ENCODE measurements at regions of chr14 and their contacts with region 1.

Region 1: DNA sequence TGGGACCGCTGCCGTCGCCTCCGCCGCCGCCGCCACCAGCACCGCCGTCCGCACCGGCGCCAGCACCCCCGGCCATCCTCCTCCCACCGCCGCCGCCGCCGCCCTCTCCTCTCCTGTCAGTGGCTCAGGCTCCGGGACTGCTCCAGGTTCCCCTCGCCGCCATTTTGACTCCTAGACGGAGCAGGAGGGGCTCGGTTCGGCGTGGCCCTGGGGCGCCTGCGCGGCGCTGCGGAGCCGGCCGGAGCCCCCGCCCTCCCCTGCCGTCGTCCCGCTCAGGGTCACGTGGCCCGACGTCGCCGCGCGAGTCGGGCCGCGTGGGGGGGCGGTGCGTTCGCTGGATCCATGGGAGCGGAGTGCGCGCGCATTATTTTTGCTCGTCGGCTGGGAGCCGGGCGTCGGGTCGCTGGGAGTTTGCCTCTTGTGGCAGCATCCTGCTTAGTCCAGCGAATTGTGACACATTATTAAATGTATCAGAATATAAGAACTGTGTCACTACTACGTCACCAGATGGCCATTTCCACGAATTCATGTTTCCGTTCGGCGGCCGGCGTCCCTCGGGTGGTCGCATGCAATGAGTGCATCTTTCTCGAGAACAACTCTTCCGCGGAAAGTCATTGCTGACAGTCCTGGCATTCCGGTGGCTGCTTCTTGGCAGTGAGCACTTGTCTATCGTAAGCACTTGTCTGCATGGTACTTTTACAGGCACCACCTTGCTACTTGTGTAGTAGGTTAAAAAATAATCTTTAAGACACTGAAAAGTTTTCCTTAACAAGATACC is at the start of gene BTBD7:
- DNase-seq: peak; percentile 95
- H3K4me3 Mint-ChIP-seq: peak within 1 kb of the TSS; percentile 92
- H3K27ac Mint-ChIP-seq: peak within 1 kb of the TSS; percentile 94
- H3K4me1 Mint-ChIP-seq: peaks cover 28% of the 10 kb centered on the region
- H3K27me3 Mint-ChIP-seq: no peaks in the 10 kb centered on the region
- CTCF ChIP-seq: no peak
- total RNA-seq, gene BTBD7: 32.5 and 45.4 TPM in 2 replicates

Region 2: GRCh38 chr14:93239869-93240677 is 93.0 kb before region 1 on chr14:
- CTCF ChIA-PET with region 1: no interaction called
- POLR2A ChIA-PET with region 1: interaction called, 6 read pairs
- intact Hi-C with region 1: loop called (anchors 2 kb)
- DNase-seq: peak; percentile 60
- H3K4me3 Mint-ChIP-seq: no peak overlapping the region
- H3K27ac Mint-ChIP-seq: peak overlapping the region; percentile 54
- H3K4me1 Mint-ChIP-seq: peaks cover 4% of the 10 kb centered on the region
- H3K27me3 Mint-ChIP-seq: no peaks in the 10 kb centered on the region
- CTCF ChIP-seq: no peak

Region 3: DNA sequence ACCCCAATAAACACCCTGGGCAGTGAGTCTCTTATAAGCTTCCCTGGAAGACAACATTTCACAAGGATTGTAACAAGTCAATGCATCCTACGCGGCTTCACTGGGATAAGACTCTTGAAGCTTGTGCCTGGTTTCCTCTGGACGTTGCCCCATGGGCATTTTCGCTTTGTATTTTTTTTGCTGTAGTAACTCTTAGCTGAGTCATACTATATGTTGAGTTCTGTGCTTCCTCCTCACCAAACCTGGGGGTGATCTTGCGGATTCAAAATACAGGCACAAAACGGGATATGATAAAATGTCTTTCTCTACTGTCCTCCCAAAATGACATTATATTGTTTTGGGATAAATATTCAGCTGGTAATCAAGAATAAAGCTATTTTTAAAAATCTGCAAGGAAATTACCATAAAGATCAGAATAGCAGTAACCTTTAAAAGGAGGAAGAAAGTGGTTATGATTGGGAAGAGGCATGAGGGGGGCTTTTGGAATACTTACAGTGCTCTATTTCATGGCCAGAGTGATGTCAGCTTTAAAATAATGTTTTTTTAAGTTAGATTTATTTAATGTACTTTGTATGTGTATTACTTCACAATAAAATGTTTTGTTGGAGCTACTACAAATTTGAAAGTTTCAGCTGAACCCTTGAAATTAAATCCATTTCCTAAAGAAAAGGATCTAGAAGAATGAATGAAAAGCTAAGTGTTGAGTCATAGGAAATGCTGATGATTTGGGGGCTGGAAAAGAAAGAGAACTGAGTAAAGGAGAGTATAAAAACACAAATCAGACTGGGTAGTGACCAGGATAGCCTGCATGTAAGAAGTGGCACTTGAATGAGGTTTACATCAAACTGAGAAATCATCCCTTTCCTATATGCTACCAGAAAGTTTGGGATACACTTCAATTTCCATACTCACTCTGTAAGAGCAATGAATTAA is 14.9 kb before region 1 on chr14:
- CTCF ChIA-PET with region 1: interaction called, 4 read pairs
- POLR2A ChIA-PET with region 1: interaction called, 33 read pairs
- intact Hi-C with region 1: no loop called
- DNase-seq: peak; percentile 85
- H3K4me3 Mint-ChIP-seq: peak overlapping the region; percentile 30
- H3K27ac Mint-ChIP-seq: peak overlapping the region; percentile 90
- H3K4me1 Mint-ChIP-seq: peaks cover 40% of the 10 kb centered on the region
- H3K27me3 Mint-ChIP-seq: no peaks in the 10 kb centered on the region
- CTCF ChIP-seq: no peak

Region 4: GRCh38 chr14:93346929-93347721 is 14.1 kb after region 1 on chr14 and contains the start of gene COX8C:
- CTCF ChIA-PET with region 1: no interaction called
- POLR2A ChIA-PET with region 1: no interaction called
- intact Hi-C with region 1: no loop called
- DNase-seq: no peak
- H3K4me3 Mint-ChIP-seq: no peak within 1 kb of the TSS
- H3K27ac Mint-ChIP-seq: no peak within 1 kb of the TSS
- H3K4me1 Mint-ChIP-seq: no peaks in the 10 kb centered on the region
- H3K27me3 Mint-ChIP-seq: no peaks in the 10 kb centered on the region
- CTCF ChIP-seq: no peak
- total RNA-seq, gene COX8C: not detected in 2 replicates

Region 5: DNA sequence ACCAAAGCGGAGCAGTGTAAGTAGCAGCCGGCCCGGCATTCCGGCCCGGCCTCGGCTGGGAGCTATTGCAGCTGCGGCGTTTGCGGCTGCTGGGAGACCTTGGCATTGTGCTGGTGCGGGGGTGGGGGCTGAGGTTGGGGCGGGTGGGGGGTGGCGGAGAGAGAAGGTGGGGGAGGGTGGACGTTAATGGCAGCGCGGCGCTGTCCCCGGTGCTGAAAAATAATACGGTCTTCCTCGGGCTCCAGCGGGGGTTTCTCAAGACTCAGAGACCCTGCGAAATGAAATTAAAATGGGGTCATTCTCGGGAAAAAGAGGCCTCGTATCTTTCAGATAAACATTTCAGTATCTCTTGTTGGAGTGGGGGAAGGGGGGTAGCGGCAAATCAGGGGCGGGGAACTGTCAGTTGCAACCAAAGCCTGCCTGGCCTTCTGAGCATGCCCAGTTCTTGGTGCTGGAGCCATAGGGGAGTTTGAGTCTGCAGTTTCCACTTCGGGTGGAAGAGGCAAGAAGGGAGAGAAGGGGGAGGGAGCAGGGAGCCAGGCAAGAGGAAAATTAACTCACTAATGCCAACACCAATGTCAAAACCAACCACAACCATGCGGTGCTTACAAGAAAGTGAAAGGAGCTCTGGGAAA is 98.1 kb after region 1 on chr14:
- CTCF ChIA-PET with region 1: no interaction called
- POLR2A ChIA-PET with region 1: no interaction called
- intact Hi-C with region 1: no loop called
- DNase-seq: peak; percentile 2
- H3K4me3 Mint-ChIP-seq: no peak overlapping the region
- H3K27ac Mint-ChIP-seq: no peak overlapping the region
- H3K4me1 Mint-ChIP-seq: no peaks in the 10 kb centered on the region
- H3K27me3 Mint-ChIP-seq: peaks cover 69% of the 10 kb centered on the region
- CTCF ChIP-seq: no peak

Measured in MCF 10A (cell line).